Esophagus squamous epithelium (tissue), 5 donors: ENCODE measurements at regions of chr4 and their contacts with region 1.

Region 1: GRCh38 chr4:37793562-37793961 is 32.9 kb upstream of the PGM2 start:
- DNase-seq: no peak
- H3K4me3 ChIP-seq: no peak overlapping the region
- H3K27ac ChIP-seq: no peak overlapping the region
- H3K4me1 ChIP-seq: no peaks in the 10 kb centered on the region
- H3K27me3 ChIP-seq: no peaks in the 10 kb centered on the region
- CTCF ChIP-seq: peak in 5 of 6 experiments; percentile 23 to 68 (median 36)
- POLR2A ChIP-seq: no peak

Region 2: GRCh38 chr4:37603070-37603468 is 190.5 kb before region 1 on chr4:
- intact Hi-C with region 1: loop called (anchors 5 kb)
- DNase-seq: peak; percentile 2
- H3K4me3 ChIP-seq: no peak overlapping the region
- H3K27ac ChIP-seq: no peak overlapping the region
- H3K4me1 ChIP-seq: peaks cover 0 to 16% (median 4%) of the 10 kb centered on the region in 3 donors
- H3K27me3 ChIP-seq: no peaks in the 10 kb centered on the region
- CTCF ChIP-seq: peak; percentile 85 to 99 (median 96)
- POLR2A ChIP-seq: no peak

Region 3: DNA sequence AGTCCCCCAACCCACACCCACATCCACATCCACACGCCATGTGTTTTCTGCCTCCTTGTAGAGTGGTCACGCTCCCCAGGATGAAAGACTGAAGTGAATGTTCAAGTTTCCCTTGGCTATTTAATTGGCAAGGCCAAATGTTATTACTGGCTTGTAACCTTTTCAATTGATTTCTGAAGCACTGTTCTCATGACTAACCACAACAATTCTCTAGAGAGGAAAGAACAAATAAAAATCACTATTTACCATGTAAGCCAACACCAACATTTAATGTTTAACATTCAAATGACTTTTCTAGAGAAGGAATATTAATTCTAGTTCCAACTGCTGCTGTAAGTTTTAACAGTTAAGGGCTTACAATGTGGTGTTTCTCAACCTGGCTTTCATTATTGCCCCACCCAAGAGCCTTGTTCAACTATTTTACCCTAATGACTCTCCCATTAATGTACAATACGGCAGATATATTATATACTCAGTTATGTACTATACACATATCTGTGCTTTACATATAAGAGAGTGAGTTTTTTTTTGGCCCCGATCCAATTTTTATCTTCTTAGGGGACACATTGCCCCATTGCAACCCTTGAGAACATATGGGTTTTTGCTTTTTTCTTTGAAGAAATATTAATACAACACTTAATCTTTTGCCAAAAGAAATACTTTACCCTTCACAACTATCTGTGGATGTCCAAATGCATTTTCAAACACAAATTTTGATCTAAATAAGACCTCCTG is 153.8 kb before region 1 on chr4:
- intact Hi-C with region 1: no loop called
- DNase-seq: no peak
- H3K4me3 ChIP-seq: no peak overlapping the region
- H3K27ac ChIP-seq: no peak overlapping the region
- H3K4me1 ChIP-seq: peaks cover 0 to 28% (median 0%) of the 10 kb centered on the region in 3 donors
- H3K27me3 ChIP-seq: no peaks in the 10 kb centered on the region
- CTCF ChIP-seq: no peak
- POLR2A ChIP-seq: no peak

Region 4: DNA sequence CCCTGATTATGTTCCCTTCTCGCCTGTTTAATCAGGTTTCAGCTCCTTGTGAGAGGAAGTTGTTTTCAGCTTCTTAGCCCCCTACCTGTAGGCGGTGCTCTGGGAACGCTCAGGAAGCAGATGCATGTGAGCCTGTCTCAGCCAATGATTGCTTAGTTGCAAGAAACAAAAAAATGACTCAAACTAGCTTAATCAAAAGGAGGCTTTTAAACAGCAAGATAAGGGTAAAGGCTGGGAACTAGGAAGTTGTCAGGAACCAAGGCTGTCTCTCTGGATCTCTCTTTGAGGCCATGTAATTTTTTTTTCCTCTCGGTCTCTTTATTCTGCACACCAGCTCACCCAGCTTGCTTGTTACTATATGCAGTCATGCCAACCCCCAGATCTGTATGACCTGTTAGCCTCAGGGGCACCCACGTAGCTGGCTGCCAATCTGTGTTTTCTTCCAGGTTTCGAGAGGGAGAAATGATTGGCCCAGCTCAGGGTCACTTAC is 275.8 kb after region 1 on chr4:
- intact Hi-C with region 1: no loop called
- DNase-seq: no peak
- H3K4me3 ChIP-seq: no peak overlapping the region
- H3K27ac ChIP-seq: peak overlapping the region in 3 of 4 donors; percentile 33 to 72 (median 64)
- H3K4me1 ChIP-seq: peaks cover 3 to 21% (median 11%) of the 10 kb centered on the region in 3 donors
- H3K27me3 ChIP-seq: no peaks in the 10 kb centered on the region
- CTCF ChIP-seq: peak in 5 of 6 experiments; percentile 32 to 81 (median 72)
- POLR2A ChIP-seq: no peak